Activated T-helper 1 cell treated with anti-CD3 and anti-CD28 coated beads, Interleukin-12 subunit alpha, Interleukin-12 subunit beta, Interleukin-2, Interleukin-4 antibody, amounts not matched to agents 30 ng/mL and 10 ng/mL and 1 ng/mL, durations not matched to agents 14 hours and 24 hours and 36 hours (primary cell): ENCODE measurements at regions of chr7 and their contacts with region 1.

Region 1: GRCh38 chr7:43721193-43721806 is 8.0 kb downstream of the COA1 start:
- DNase-seq: no peak
- H3K4me3 Mint-ChIP-seq: no peak overlapping the region
- H3K27ac Mint-ChIP-seq: no peak overlapping the region
- H3K4me1 Mint-ChIP-seq: peaks cover 27% of the 10 kb centered on the region
- H3K27me3 Mint-ChIP-seq: no peaks in the 10 kb centered on the region

Region 2: DNA sequence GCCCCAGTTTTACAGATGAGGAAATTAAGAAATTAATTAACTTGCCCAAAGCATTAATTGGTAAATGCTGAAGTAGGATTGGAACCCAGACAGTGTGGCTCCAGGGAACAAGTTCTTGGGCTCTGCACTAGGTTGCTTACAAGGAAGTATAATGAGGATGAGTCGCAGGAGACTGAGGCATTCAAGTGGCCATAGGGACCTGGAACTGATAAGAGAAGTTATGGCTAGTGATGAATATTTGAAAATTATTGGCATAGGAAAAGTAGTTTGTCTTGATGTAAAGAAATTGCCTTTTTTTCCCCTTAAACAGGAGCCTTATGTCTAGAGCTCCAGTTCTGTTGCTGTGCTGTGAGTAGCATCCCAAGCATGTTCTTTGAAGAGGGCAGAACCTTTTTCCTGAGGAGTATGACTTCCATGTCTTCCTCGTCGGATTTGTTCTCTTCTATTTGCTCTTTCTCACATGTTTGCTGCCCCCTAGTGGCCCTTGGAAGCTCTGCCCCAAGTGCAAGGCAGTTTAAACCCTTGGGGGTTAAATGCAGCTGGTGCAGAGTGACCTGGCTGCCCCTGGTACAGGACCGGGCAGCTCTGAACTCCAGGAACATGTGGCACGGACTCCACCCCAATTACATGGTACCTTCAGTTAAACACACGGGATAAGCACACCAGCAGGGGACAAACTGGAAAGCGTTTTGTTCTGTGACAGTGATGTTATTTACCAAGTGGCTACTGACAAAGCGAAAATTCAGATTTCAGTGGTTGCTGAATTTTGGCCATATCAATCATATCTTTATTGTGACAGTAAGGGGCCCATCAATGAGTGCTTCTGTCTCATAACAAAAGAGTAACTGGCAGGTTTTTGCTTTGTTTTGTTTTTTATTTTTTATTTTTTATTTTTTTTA is 460.1 kb before region 1 on chr7:
- intact Hi-C with region 1: loop called (anchors 2 kb)
- DNase-seq: peak; percentile 52
- H3K4me3 Mint-ChIP-seq: no peak overlapping the region
- H3K27ac Mint-ChIP-seq: no peak overlapping the region
- H3K4me1 Mint-ChIP-seq: no peaks in the 10 kb centered on the region
- H3K27me3 Mint-ChIP-seq: peaks cover 10% of the 10 kb centered on the region

Region 3: DNA sequence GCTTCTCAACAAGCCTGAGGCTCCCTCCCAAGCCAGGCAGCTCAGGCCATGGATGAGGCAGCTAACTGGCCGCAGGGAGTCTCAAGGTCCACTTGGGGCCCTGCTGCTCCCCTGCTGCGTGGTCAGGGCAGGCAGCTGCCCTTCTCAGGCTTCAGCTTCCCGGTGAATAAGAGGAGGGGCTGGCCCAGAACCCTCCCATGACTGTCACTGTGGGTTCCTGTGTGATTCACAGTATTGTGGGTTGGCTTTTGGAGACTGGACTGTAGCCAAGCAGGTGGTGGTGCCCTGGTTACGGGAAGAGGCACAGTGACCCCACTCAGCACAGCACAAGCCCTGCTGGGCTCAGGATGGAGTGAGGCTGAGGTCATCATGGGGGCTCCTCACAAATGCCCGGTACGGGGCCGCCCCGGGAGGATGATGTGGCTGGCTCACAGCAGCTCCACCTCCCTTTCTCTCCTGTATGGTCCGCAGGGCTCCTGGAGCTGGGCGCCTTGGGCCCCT is 419.0 kb before region 1 on chr7:
- intact Hi-C with region 1: loop called (anchors 5 kb)
- DNase-seq: no peak
- H3K4me3 Mint-ChIP-seq: no peak overlapping the region
- H3K27ac Mint-ChIP-seq: no peak overlapping the region
- H3K4me1 Mint-ChIP-seq: peaks cover 23% of the 10 kb centered on the region
- H3K27me3 Mint-ChIP-seq: peaks cover 7% of the 10 kb centered on the region

Region 4: DNA sequence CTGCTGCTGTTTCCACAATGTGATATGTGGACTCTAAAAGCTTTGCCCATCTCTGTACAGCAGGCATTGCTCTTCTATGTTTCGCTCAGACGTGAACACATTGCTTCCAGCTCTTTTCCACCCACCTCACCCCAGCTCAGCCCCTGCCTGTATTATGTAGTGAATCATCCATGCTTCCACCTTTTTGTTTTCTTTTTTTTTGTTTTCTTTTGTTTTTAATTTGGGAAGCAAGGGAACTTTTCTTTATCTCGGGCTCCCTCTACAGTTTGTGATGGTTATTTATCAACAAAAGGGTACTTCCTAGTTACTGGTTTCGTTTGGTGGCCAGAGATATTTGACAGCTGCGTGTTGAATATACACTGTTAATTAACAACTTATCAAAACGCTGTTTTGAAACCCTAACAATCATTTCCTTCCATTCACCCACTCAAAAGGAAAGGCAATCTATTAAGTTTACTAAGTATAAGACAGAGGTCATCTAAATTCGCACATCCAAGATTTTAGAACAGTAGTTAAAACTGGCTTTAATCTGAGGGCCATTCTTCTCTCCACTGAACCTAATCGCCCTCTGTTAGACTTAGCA is 266.3 kb before region 1 on chr7:
- intact Hi-C with region 1: loop called (anchors 1 kb)
- DNase-seq: no peak
- H3K4me3 Mint-ChIP-seq: no peak overlapping the region
- H3K27ac Mint-ChIP-seq: no peak overlapping the region
- H3K4me1 Mint-ChIP-seq: peaks cover 5% of the 10 kb centered on the region
- H3K27me3 Mint-ChIP-seq: peaks cover 18% of the 10 kb centered on the region

Region 5: GRCh38 chr7:43700059-43700501 is 21.2 kb before region 1 on chr7:
- intact Hi-C with region 1: loop called (anchors 1 kb)
- DNase-seq: no peak
- H3K4me3 Mint-ChIP-seq: no peak overlapping the region
- H3K27ac Mint-ChIP-seq: no peak overlapping the region
- H3K4me1 Mint-ChIP-seq: peaks cover 65% of the 10 kb centered on the region
- H3K27me3 Mint-ChIP-seq: no peaks in the 10 kb centered on the region

Region 6: DNA sequence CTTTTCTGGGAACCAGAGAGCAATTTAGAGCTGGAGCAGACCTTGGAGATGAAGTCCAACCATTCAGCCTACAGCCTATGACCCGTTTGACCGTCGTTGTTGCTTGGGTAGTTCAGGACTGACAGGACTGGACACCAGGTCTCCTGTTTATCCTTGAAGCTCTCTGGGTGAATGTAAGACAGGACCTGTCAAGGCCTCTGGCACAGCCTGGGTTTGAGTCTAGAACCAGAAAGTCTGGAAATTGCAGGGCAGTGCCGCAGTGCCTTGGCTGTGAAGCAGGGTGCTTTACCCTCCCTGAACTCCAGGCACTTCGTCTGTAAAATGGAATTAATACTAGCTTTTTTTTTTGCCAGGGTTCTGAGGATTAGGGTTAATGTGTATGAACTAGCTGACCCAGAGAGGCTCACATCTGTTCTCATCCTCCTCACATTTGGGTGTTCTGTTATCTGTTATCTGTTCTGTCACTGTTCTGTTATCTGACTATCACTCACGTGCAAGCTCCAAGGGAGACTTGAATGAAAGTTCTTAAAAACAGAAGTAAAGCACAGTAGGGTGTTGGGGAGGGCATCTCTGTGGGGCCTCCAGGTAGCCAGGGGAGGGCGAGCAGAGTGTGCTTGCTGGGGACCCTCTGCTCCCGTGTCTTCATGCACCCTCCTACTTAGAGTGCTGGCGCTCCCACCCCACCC is 47.0 kb after region 1 on chr7:
- intact Hi-C with region 1: no loop called
- DNase-seq: no peak
- H3K4me3 Mint-ChIP-seq: no peak overlapping the region
- H3K27ac Mint-ChIP-seq: no peak overlapping the region
- H3K4me1 Mint-ChIP-seq: peaks cover 17% of the 10 kb centered on the region
- H3K27me3 Mint-ChIP-seq: no peaks in the 10 kb centered on the region

Region 7: GRCh38 chr7:44955733-44956132 is 1234.4 kb after region 1 on chr7:
- intact Hi-C with region 1: no loop called
- DNase-seq: no peak
- H3K4me3 Mint-ChIP-seq: no peak overlapping the region
- H3K27ac Mint-ChIP-seq: no peak overlapping the region
- H3K4me1 Mint-ChIP-seq: peaks cover 12% of the 10 kb centered on the region
- H3K27me3 Mint-ChIP-seq: peaks cover 6% of the 10 kb centered on the region